ENCODE measurements at regions of chr4 and their contacts with region 1.

Region 1: GRCh38 chr4:150423503-150423902 is 158.4 kb upstream of the MAB21L2 start:
- DNase-seq: no peak
- ATAC-seq: no peak
- H3K4me3 ChIP-seq: no peak overlapping the region
- H3K27ac ChIP-seq: no peak overlapping the region
- H3K4me1 ChIP-seq: no peaks in the 10 kb centered on the region
- H3K27me3 ChIP-seq: no peaks in the 10 kb centered on the region
- CTCF ChIP-seq: no peak
- EP300 ChIP-seq: no peak
- POLR2A ChIP-seq: no peak
- RAD21 ChIP-seq: no peak

Region 2: DNA sequence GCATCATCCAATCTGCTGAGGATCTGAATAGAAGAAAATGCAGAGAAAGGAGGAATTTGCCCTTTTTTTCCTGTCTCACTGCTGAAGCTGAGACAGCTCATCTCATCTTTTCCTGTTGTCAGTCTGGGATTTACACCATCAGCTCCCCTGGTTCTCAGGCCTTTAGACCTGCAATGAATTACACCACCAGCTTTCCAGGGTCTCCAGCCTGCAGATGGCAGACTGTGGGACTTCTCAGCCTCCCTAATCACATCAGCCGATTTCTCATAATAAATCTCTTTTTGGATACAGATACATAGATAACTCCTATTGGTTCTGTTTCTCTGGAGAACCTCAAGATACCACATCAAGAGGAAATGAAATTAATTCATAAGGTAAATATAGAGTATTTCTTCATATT is 23.9 kb after region 1 on chr4:
- CTCF ChIA-PET with region 1: no interaction called
- POLR2A ChIA-PET with region 1: interaction called, 11 read pairs
- RAD21 ChIA-PET with region 1: no interaction called
- SMC1A ChIA-PET with region 1: interaction called, 6 read pairs
- in situ Hi-C with region 1: no loop called
- intact Hi-C with region 1: no loop called
- DNase-seq: no peak
- ATAC-seq: no peak
- H3K4me3 ChIP-seq: no peak overlapping the region
- H3K27ac ChIP-seq: no peak overlapping the region
- H3K4me1 ChIP-seq: no peaks in the 10 kb centered on the region
- H3K27me3 ChIP-seq: no peaks in the 10 kb centered on the region
- CTCF ChIP-seq: no peak
- EP300 ChIP-seq: no peak
- POLR2A ChIP-seq: no peak
- RAD21 ChIP-seq: no peak

Region 3: GRCh38 chr4:150491132-150492049 is 67.9 kb after region 1 on chr4:
- CTCF ChIA-PET with region 1: no interaction called
- POLR2A ChIA-PET with region 1: no interaction called
- RAD21 ChIA-PET with region 1: no interaction called
- SMC1A ChIA-PET with region 1: no interaction called
- in situ Hi-C with region 1: no loop called
- intact Hi-C with region 1: no loop called
- DNase-seq: no peak
- ATAC-seq: no peak
- H3K4me3 ChIP-seq: no peak overlapping the region
- H3K27ac ChIP-seq: no peak overlapping the region
- H3K4me1 ChIP-seq: no peaks in the 10 kb centered on the region
- H3K27me3 ChIP-seq: no peaks in the 10 kb centered on the region
- CTCF ChIP-seq: no peak
- EP300 ChIP-seq: no peak
- POLR2A ChIP-seq: no peak
- RAD21 ChIP-seq: no peak